ENCODE measurements at regions of chr20 and their contacts with region 1.

Region 1: DNA sequence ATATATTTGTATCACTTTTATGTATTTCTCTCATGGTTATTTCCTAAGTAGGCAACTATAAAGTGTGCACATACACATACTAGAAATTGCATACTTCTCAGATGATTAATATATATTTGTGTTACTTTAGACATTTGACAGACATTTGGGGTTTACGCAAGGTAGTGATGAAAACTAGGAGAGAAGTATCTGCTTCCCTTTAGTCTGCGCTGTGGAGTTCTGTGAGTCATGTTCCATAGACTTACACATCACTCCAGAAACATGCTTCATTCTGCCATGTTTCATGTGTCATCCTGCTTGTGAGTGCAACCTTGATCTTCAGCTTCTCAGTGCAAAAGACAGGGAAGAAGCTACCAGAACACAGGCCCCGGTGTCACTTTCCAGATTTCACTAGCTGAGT is 200.7 kb upstream of the BMP2 start:
- ATAC-seq: peak in 3 of 8 experiments; percentile 22 to 71 (median 39)
- H3K4me3 ChIP-seq: no peak overlapping the region
- H3K27ac ChIP-seq: no peak overlapping the region
- H3K4me1 ChIP-seq: peaks cover 0 to 3% of the 10 kb centered on the region in 2 donors

Region 2: DNA sequence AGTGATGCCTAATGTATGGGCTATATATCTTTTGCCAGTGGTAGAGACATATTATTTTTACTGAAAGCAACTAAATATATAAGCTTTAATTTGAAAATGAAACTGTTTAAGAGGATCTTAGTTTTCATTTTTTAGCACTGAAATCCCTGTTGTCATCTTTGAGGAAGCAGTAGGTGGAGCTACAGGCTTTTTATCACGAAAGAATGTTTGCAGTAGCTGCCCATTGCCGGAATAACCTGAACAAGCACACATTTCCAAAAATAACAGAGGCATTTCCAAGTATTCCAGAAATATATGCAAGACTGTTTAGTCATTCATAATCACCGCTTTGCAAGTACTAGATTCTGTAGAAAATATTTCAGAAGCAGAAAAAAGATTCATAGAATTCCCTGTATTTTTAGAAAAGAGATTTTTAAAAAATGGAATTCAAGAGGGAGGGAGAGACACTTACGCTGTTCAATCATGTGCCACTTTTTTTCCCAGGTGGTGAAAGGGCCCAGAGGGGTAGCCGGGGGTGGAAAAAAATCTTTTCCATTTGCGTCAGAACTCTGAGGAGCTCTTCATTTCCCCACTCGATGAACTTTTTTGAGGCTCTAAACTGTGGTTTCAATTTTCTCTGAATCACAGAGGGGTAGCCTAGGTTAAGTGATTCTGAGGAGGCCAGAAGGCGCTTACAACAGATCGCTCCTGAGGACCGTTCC is 301.5 kb before region 1 on chr20:
- in situ Hi-C with region 1: loop called in 1 of 9 experiments (anchors 25 kb)
- ATAC-seq: peak in 3 of 8 experiments; percentile 69 to 94 (median 78)
- H3K4me3 ChIP-seq: no peak overlapping the region
- H3K27ac ChIP-seq: no peak overlapping the region
- H3K4me1 ChIP-seq: peaks cover 6 to 9% of the 10 kb centered on the region in 2 donors